OCI-LY7 (cell line): ENCODE measurements at regions of chr20 and their contacts with region 1.

Region 1: GRCh38 chr20:5205348-5206210 is 78.8 kb downstream of the CDS2 start:
- DNase-seq: peak; percentile 75
- H3K4me3 ChIP-seq: no peak overlapping the region
- H3K27ac ChIP-seq: no peak overlapping the region
- H3K4me1 ChIP-seq: no peaks in the 10 kb centered on the region
- CTCF ChIP-seq: peak; percentile 98

Region 2: DNA sequence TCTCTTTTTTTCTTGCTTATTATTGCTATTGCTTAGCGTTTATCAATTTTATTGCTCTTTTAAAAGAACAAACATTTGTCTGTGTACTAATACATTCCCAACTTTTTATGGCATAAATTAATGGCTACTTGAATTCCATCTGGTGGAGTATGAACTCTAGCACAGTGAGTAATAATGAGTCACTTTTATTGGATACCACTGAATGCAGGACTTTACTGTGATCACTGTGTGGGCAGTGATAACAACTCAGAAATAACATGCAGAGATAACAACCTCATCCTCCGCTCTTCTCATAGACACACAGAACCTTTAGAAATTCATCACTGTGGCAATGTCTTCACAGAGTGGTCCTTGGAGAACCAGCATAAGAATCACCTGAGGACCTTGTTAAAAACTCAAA is 658.8 kb before region 1 on chr20:
- CTCF ChIA-PET with region 1: no interaction called
- POLR2A ChIA-PET with region 1: no interaction called
- intact Hi-C with region 1: no loop called
- DNase-seq: no peak
- H3K4me3 ChIP-seq: no peak overlapping the region
- H3K27ac ChIP-seq: no peak overlapping the region
- H3K4me1 ChIP-seq: no peaks in the 10 kb centered on the region
- CTCF ChIP-seq: no peak

Region 3: GRCh38 chr20:4740774-4741431 is 464.7 kb before region 1 on chr20:
- CTCF ChIA-PET with region 1: no interaction called
- POLR2A ChIA-PET with region 1: no interaction called
- intact Hi-C with region 1: loop called (anchors 10 kb)
- DNase-seq: peak; percentile 65
- H3K4me3 ChIP-seq: no peak overlapping the region
- H3K27ac ChIP-seq: no peak overlapping the region
- H3K4me1 ChIP-seq: no peaks in the 10 kb centered on the region
- CTCF ChIP-seq: peak; percentile 96

Region 4: GRCh38 chr20:5448449-5449118 is 243.0 kb after region 1 on chr20:
- CTCF ChIA-PET with region 1: no interaction called
- POLR2A ChIA-PET with region 1: no interaction called
- intact Hi-C with region 1: loop called (anchors 1 kb)
- DNase-seq: peak; percentile 57
- H3K4me3 ChIP-seq: no peak overlapping the region
- H3K27ac ChIP-seq: no peak overlapping the region
- H3K4me1 ChIP-seq: no peaks in the 10 kb centered on the region
- CTCF ChIP-seq: peak; percentile 92